Activated T-helper 2 cell treated with anti-CD3 and anti-CD28 coated beads, Interferon-gamma antibody, Interleukin-2, Interleukin-4, amounts not matched to agents 10 μg/mL and 5 μg/mL and 100 μg/mL, durations not matched to agents 14 hours and 24 hours and 36 hours (primary cell): ENCODE measurements at regions of chr2 and their contacts with region 1.

Region 1: GRCh38 chr2:169824373-169825333 is at the start of gene METTL5:
- DNase-seq: peak; percentile 74
- H3K4me3 Mint-ChIP-seq: peak within 1 kb of the TSS; percentile 93
- H3K27ac Mint-ChIP-seq: peak within 1 kb of the TSS; percentile 79
- H3K4me1 Mint-ChIP-seq: peaks cover 50% of the 10 kb centered on the region
- H3K27me3 Mint-ChIP-seq: no peaks in the 10 kb centered on the region
- total RNA-seq, gene METTL5: 88.2 and 95.2 TPM in 2 replicates

Region 2: GRCh38 chr2:169462896-169463695 is 361.6 kb before region 1 on chr2:
- intact Hi-C with region 1: no loop called
- DNase-seq: no peak
- H3K4me3 Mint-ChIP-seq: no peak overlapping the region
- H3K27ac Mint-ChIP-seq: no peak overlapping the region
- H3K4me1 Mint-ChIP-seq: peaks cover 2% of the 10 kb centered on the region
- H3K27me3 Mint-ChIP-seq: peaks cover 3% of the 10 kb centered on the region

Region 3: DNA sequence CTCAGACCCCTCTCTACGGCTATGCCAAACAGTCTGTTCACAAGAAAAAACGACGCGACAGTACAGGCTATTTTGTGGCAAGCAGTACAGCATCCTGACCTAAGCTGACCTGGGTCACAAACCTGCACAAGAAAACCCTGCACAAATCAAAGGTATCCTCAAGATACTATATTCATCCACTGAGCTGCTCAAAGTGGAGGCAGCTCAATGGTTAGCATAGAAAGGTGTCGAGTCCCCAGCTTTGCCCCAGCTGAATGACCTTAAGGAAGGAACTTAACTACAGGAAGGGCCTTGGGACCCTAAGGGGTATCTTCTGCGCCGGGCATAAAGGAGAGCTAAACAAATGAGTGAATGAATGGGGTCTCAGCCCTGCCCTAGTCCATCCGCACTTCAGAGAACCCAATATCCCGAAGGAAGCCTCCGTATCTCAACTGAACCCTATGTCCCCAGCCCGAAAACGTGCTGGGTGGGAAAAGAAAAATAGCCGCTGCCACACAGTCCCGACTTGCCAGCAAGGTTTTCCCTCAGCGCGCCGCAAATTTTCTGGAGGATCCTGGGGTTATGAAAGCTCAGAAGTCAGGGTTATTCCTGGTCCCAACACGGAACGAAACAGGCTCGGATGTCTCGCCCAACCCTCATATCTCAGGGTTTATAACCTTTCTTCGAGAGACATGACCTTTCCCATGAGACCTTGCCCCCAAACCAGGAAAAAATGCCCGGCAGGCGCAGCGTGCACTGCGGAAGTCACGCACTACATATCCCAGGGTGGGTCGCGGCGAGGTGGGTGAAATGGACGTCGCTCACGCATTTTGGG is 251.3 kb before region 1 on chr2 and contains the start of gene FASTKD1:
- intact Hi-C with region 1: loop called (anchors 5 kb)
- DNase-seq: peak; percentile 81
- H3K4me3 Mint-ChIP-seq: peak within 1 kb of the TSS; percentile 97
- H3K27ac Mint-ChIP-seq: peak within 1 kb of the TSS; percentile 91
- H3K4me1 Mint-ChIP-seq: peaks cover 18% of the 10 kb centered on the region
- H3K27me3 Mint-ChIP-seq: no peaks in the 10 kb centered on the region
- total RNA-seq, gene FASTKD1: 61.5 and 61.9 TPM in 2 replicates

Region 4: GRCh38 chr2:169798718-169799592 is 25.7 kb before region 1 on chr2 and contains the start of gene SSB:
- intact Hi-C with region 1: loop called (anchors 1 kb)
- DNase-seq: peak; percentile 88
- H3K4me3 Mint-ChIP-seq: peak within 1 kb of the TSS; percentile 86
- H3K27ac Mint-ChIP-seq: peak within 1 kb of the TSS; percentile 85
- H3K4me1 Mint-ChIP-seq: peaks cover 12% of the 10 kb centered on the region
- H3K27me3 Mint-ChIP-seq: peaks cover 3% of the 10 kb centered on the region
- total RNA-seq, gene SSB: 99.7 and 111 TPM in 2 replicates

Region 5: GRCh38 chr2:169928463-169928864 is 103.8 kb after region 1 on chr2:
- intact Hi-C with region 1: loop called (anchors 1 kb)
- DNase-seq: no peak
- H3K4me3 Mint-ChIP-seq: no peak overlapping the region
- H3K27ac Mint-ChIP-seq: no peak overlapping the region
- H3K4me1 Mint-ChIP-seq: no peaks in the 10 kb centered on the region
- H3K27me3 Mint-ChIP-seq: no peaks in the 10 kb centered on the region